HepG2 (cell line): ENCODE measurements at regions of chr17 and their contacts with region 1.

Region 1: DNA sequence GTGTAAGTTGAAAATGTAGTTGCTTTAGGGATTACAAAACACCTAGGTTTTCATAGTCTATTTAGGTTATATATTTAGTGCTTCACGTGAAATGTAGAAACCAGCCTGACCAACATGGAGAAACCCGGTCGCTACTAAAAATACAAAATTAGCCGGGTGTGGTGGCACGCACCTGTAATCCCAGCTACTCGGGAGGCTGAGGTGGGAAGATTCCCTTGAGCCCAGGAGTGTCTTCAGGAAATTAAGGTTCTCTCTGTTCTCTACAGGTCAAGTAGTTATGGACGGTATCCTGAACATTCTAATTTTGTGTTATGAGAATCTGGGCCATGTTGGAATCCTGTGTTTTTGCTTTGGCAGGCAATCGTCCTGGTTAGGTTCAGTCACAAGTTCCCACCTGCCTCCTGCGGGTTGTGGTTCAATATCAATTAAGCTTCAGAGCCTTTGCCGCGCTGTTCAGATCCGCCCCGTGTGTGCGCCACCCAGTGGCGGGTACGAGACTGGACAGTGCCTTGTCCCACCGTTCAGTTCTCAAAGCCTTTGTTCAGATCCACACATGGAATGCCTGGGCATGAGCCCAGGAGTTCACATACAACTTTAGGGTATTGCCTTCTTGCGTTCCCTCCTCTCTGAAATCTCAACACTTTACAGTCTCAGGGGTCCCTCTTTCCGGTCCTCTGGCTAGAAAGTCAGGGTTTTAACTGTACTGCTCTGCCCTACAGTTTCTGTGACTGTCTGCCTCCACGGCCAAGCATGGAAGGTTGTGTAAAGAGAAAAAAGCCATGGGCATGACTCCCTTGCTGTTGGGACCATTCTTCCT is 41.7 kb downstream of the HEATR6 start:
- DNase-seq: peak; percentile 83
- ATAC-seq: peak; percentile 97
- H3K4me3 ChIP-seq: peak overlapping the region; percentile 2 to 49 (median 23); a peak in 4 of 6 replicates
- H3K27ac ChIP-seq: peak overlapping the region; percentile 5
- H3K4me1 ChIP-seq: peaks cover 23% of the 10 kb centered on the region
- H3K27me3 ChIP-seq: no peaks in the 10 kb centered on the region; a peak in 1 of 5 replicates
- CTCF ChIP-seq: peak; percentile 98
- EP300 ChIP-seq: no peak
- POLR2A ChIP-seq: peak; percentile 43 to 82; a peak in 2 of 4 replicates
- RAD21 ChIP-seq: peak; percentile 59; the same call in 1 of the 2 replicates

Region 2: GRCh38 chr17:59746849-59747445 is 290.1 kb before region 1 on chr17:
- CTCF ChIA-PET with region 1: no interaction called
- POLR2A ChIA-PET with region 1: no interaction called
- in situ Hi-C with region 1: loop called (anchors 10 kb)
- intact Hi-C with region 1: loop called (anchors 5 kb)
- DNase-seq: peak; percentile 62
- ATAC-seq: peak; percentile 69
- H3K4me3 ChIP-seq: no peak overlapping the region
- H3K27ac ChIP-seq: no peak overlapping the region
- H3K4me1 ChIP-seq: peaks cover 25% of the 10 kb centered on the region
- H3K27me3 ChIP-seq: no peaks in the 10 kb centered on the region
- CTCF ChIP-seq: peak; percentile 71
- EP300 ChIP-seq: no peak
- POLR2A ChIP-seq: no peak
- RAD21 ChIP-seq: peak; percentile 34; the same call in 1 of the 2 replicates

Region 3: GRCh38 chr17:59914274-59914854 is 122.6 kb before region 1 on chr17:
- CTCF ChIA-PET with region 1: interaction called, 14 read pairs
- POLR2A ChIA-PET with region 1: no interaction called
- in situ Hi-C with region 1: loop called (anchors 10 kb)
- intact Hi-C with region 1: loop called (anchors 5 kb)
- DNase-seq: peak; percentile 51
- ATAC-seq: peak; percentile 47; the same call in 2 of the 3 replicates
- H3K4me3 ChIP-seq: no peak overlapping the region
- H3K27ac ChIP-seq: no peak overlapping the region
- H3K4me1 ChIP-seq: no peaks in the 10 kb centered on the region
- H3K27me3 ChIP-seq: no peaks in the 10 kb centered on the region; a peak in 1 of 5 replicates
- CTCF ChIP-seq: peak; percentile 56
- EP300 ChIP-seq: no peak
- POLR2A ChIP-seq: no peak
- RAD21 ChIP-seq: no peak